Activated CD8-positive, alpha-beta T cell treated with anti-CD3 and anti-CD28 coated beads for 36 hours (primary cell): ENCODE measurements at regions of chr5 and their contacts with region 1.

Region 1: GRCh38 chr5:10283927-10284635 is 23.6 kb downstream of the CMBL start:
- DNase-seq: peak; percentile 89
- ATAC-seq: peak; percentile 99
- H3K4me3 Mint-ChIP-seq: no peak overlapping the region
- H3K27ac Mint-ChIP-seq: no peak overlapping the region
- H3K4me1 Mint-ChIP-seq: peaks cover 13% of the 10 kb centered on the region
- H3K27me3 Mint-ChIP-seq: peaks cover 1% of the 10 kb centered on the region
- CTCF ChIP-seq: peak; percentile 94

Region 2: DNA sequence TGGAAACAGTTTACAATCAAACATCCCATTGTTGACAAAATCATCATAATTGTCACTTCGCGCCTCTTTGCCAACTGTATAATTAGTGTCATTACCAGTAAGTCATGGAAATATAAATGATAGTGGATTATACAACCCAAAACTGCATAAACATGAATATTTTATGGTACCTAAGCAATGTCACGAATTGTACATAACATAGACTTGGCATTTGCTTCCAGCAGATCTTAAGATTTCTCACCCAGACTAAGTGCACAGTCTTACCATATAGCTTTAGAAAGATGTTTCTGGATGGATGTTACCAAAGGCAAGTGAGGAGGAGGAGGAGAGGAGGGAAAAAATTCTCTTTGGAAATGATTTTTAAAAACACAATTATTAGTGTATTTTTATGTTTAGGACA is 540.6 kb before region 1 on chr5:
- CTCF ChIA-PET with region 1: no interaction called
- POLR2A ChIA-PET with region 1: no interaction called
- intact Hi-C with region 1: no loop called
- DNase-seq: no peak
- ATAC-seq: no peak
- H3K4me3 Mint-ChIP-seq: no peak overlapping the region
- H3K27ac Mint-ChIP-seq: no peak overlapping the region
- H3K4me1 Mint-ChIP-seq: no peaks in the 10 kb centered on the region
- H3K27me3 Mint-ChIP-seq: no peaks in the 10 kb centered on the region
- CTCF ChIP-seq: no peak

Region 3: GRCh38 chr5:10192309-10192708 is 91.8 kb before region 1 on chr5:
- CTCF ChIA-PET with region 1: no interaction called
- POLR2A ChIA-PET with region 1: no interaction called
- intact Hi-C with region 1: no loop called
- DNase-seq: no peak
- ATAC-seq: no peak
- H3K4me3 Mint-ChIP-seq: no peak overlapping the region
- H3K27ac Mint-ChIP-seq: no peak overlapping the region
- H3K4me1 Mint-ChIP-seq: no peaks in the 10 kb centered on the region
- H3K27me3 Mint-ChIP-seq: no peaks in the 10 kb centered on the region
- CTCF ChIP-seq: no peak

Region 4: GRCh38 chr5:10293907-10294662 is 10.0 kb after region 1 on chr5:
- CTCF ChIA-PET with region 1: interaction called, 15 read pairs
- POLR2A ChIA-PET with region 1: interaction called, 3 read pairs
- intact Hi-C with region 1: no loop called
- DNase-seq: no peak
- ATAC-seq: no peak
- H3K4me3 Mint-ChIP-seq: no peak overlapping the region
- H3K27ac Mint-ChIP-seq: no peak overlapping the region
- H3K4me1 Mint-ChIP-seq: no peaks in the 10 kb centered on the region
- H3K27me3 Mint-ChIP-seq: peaks cover 5% of the 10 kb centered on the region
- CTCF ChIP-seq: no peak

Region 5: DNA sequence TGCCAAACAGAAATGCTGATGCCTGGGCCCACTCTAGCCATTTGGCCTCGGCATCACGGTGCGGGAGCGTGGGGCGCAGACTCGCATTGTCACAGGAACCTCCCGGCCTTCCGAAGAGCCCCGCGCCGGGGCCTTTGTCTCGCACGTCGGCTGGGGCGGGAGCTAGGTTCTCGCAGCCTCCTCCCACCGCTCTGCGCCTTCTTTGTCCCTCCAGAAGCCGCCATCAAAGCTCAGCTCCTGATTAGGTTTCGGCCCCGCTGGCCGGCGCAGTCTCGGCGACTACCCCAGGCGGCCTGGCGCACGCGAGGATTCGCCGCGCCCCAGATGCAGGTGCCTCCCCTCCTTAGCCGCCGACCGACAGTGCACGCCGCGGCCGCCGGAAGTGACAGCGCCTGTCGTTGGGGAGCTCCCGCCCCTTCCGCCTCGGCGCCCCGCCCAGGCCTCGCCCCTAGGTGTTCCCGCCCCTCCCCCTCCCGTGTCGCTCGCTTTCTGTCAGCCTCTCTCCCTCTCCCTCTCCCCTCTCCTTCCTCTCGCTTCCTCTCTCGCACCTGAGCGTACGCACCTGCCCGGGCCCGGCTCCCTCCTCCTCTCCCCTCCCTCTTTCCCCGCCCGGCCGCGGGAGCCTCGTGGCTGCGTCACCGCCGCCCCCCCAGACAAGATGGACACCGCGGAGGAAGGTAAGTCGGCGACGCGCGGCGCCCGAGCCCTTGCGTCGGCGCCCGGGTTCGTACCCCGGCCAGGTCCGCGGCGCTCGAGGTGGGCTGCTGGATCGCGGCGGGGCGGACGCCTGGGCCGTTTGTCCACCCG is 69.4 kb after region 1 on chr5 and contains the start of gene MARCHF6:
- CTCF ChIA-PET with region 1: interaction called, 11 read pairs
- POLR2A ChIA-PET with region 1: interaction called, 3 read pairs
- intact Hi-C with region 1: loop called (anchors 10 kb)
- DNase-seq: peak; percentile 97
- ATAC-seq: peak; percentile 85
- H3K4me3 Mint-ChIP-seq: peak within 1 kb of the TSS; percentile 94
- H3K27ac Mint-ChIP-seq: peak within 1 kb of the TSS; percentile 98
- H3K4me1 Mint-ChIP-seq: peaks cover 37% of the 10 kb centered on the region
- H3K27me3 Mint-ChIP-seq: no peaks in the 10 kb centered on the region
- CTCF ChIP-seq: no peak
- total RNA-seq, gene MARCHF6: 92.8 to 95.6 TPM

Region 6: DNA sequence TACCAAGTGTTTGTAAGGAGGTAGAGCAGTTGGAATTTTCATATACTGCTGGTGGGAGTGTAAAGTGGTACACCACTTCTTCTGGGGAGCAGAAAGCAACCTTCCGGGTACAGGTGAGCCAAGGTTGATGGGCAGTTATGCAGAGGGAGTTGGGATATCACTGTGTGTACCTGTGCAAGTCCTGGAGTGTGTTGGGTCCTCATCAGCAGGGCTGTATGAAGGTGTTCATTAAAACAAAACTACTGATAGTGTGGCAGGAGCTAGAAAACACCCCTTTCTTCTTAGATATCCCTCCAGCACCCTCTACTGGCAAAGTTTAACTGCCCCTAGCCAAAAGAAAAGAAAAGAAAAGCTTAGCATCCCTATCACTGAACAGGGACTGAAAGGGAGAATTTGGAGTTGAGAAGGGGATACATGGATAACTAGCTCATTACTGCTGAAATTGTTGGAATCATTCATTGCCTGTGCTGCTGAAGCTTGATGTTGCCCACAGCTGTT is 80.2 kb after region 1 on chr5:
- CTCF ChIA-PET with region 1: interaction called, 32 read pairs
- POLR2A ChIA-PET with region 1: no interaction called
- intact Hi-C with region 1: loop called (anchors 10 kb)
- DNase-seq: no peak
- ATAC-seq: no peak
- H3K4me3 Mint-ChIP-seq: no peak overlapping the region
- H3K27ac Mint-ChIP-seq: no peak overlapping the region
- H3K4me1 Mint-ChIP-seq: peaks cover 67% of the 10 kb centered on the region
- H3K27me3 Mint-ChIP-seq: no peaks in the 10 kb centered on the region
- CTCF ChIP-seq: no peak

Region 7: DNA sequence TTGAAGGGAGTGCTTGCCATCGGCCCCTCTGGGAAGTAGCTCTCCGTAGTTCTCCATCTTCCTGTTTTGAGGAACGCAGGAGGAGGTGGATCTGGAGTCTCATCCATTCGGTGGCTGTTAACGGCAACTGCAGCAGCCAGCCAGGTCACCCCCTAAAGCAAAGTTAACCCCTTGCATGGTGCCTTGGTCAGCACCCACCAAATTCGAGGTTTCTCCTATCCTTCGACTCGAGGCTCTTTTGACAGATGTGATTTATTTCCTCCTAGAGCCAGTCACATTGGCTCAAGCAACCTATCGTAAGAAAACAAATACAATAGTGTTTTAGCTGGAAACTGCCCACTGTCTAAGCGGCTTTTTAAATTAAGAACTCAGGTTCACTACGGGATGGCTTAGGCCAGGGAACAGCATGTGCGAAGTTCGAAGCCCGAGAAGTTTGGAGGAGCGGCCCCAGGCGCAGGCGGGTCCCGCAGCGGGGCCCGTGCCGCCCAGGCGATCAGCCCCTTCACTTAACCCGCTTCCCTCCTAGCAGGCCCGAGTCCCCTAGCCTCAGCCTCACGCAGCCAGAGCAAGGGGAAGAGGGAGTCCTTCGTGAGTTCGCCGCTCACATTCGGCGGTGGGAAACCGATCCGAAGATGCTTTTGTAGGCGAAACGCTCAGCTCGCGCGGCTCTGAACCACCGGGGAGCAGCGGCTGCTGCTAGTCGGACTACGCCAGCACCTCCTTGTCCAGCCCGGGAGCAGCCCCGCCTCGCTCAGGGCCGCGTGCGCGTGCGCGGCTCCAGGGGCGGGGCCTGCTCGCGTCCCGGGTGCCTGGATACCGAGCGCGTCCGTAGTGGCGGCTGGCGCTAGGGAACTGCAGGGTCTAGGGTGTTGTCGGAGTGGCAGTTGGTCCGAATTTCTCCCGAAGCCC is 157.3 kb after region 1 on chr5 and contains the start of gene ROPN1L:
- CTCF ChIA-PET with region 1: interaction called, 10 read pairs
- POLR2A ChIA-PET with region 1: no interaction called
- intact Hi-C with region 1: no loop called
- DNase-seq: peak; percentile 76
- ATAC-seq: peak; percentile 98
- H3K4me3 Mint-ChIP-seq: peak within 1 kb of the TSS; percentile 72
- H3K27ac Mint-ChIP-seq: no peak within 1 kb of the TSS
- H3K4me1 Mint-ChIP-seq: peaks cover 27% of the 10 kb centered on the region
- H3K27me3 Mint-ChIP-seq: peaks cover 8% of the 10 kb centered on the region
- CTCF ChIP-seq: no peak
- total RNA-seq, gene ROPN1L: not detected